ENCODE measurements at regions of chr6 and their contacts with region 1.

Region 1: GRCh38 chr6:50711686-50712085 is 1.6 kb upstream of the TFAP2D start:
- DNase-seq: no peak
- ATAC-seq: no peak
- H3K4me3 ChIP-seq: no peak overlapping the region
- H3K4me3 Mint-ChIP-seq: no peak overlapping the region
- H3K27ac ChIP-seq: no peak overlapping the region
- H3K27ac Mint-ChIP-seq: no peak overlapping the region
- H3K4me1 ChIP-seq: no peaks in the 10 kb centered on the region
- H3K4me1 Mint-ChIP-seq: no peaks in the 10 kb centered on the region
- H3K27me3 ChIP-seq: peaks cover 24 to 46% of the 10 kb centered on the region in 2 experiments
- H3K27me3 Mint-ChIP-seq: peaks cover 62 to 87% of the 10 kb centered on the region in 2 donors

Region 2: DNA sequence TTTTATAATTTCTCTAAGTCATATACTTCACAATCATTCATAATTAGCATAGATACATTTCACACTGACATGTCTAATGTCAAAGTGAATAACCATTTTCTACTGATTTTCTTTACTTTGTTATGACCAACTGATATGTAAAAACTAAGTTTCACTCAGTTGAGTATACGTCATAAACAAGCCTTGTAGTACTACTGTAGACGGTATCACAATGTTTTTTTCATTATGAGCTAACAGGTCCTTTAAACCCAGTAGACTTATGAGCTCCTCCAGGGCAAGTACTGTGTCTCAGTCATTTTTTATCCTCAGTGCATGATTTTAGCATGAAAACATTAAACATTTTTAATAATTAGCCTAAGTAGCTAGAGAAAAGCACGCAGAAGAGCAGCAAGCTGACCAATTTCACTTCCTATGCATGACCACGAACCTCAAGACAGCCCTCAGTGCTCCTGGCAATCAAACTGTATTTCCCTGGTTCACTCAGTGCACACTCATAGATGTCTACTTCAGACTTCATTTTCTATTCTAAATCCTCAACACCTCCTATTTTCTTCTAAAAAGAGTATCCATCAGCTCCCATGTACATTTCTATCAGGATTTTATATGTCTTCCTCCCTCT is 30.4 kb before region 1 on chr6:
- CTCF ChIA-PET with region 1: interaction called in 1 of 2 experiments, 11 read pairs
- POLR2A ChIA-PET with region 1: no interaction called
- DNase-seq: no peak
- ATAC-seq: no peak
- H3K4me3 ChIP-seq: no peak overlapping the region
- H3K4me3 Mint-ChIP-seq: no peak overlapping the region
- H3K27ac ChIP-seq: no peak overlapping the region
- H3K27ac Mint-ChIP-seq: no peak overlapping the region
- H3K4me1 ChIP-seq: no peaks in the 10 kb centered on the region
- H3K4me1 Mint-ChIP-seq: no peaks in the 10 kb centered on the region
- H3K27me3 ChIP-seq: no peaks in the 10 kb centered on the region
- H3K27me3 Mint-ChIP-seq: no peaks in the 10 kb centered on the region

Region 3: GRCh38 chr6:50691814-50692495 is 19.7 kb before region 1 on chr6:
- CTCF ChIA-PET with region 1: no interaction called
- POLR2A ChIA-PET with region 1: no interaction called
- DNase-seq: no peak
- ATAC-seq: no peak
- H3K4me3 ChIP-seq: no peak overlapping the region
- H3K4me3 Mint-ChIP-seq: no peak overlapping the region
- H3K27ac ChIP-seq: no peak overlapping the region
- H3K27ac Mint-ChIP-seq: no peak overlapping the region
- H3K4me1 ChIP-seq: no peaks in the 10 kb centered on the region
- H3K4me1 Mint-ChIP-seq: no peaks in the 10 kb centered on the region
- H3K27me3 ChIP-seq: no peaks in the 10 kb centered on the region
- H3K27me3 Mint-ChIP-seq: no peaks in the 10 kb centered on the region